SK-N-SH (cell line): ENCODE measurements at regions of chr1 and their contacts with region 1.

Region 1: DNA sequence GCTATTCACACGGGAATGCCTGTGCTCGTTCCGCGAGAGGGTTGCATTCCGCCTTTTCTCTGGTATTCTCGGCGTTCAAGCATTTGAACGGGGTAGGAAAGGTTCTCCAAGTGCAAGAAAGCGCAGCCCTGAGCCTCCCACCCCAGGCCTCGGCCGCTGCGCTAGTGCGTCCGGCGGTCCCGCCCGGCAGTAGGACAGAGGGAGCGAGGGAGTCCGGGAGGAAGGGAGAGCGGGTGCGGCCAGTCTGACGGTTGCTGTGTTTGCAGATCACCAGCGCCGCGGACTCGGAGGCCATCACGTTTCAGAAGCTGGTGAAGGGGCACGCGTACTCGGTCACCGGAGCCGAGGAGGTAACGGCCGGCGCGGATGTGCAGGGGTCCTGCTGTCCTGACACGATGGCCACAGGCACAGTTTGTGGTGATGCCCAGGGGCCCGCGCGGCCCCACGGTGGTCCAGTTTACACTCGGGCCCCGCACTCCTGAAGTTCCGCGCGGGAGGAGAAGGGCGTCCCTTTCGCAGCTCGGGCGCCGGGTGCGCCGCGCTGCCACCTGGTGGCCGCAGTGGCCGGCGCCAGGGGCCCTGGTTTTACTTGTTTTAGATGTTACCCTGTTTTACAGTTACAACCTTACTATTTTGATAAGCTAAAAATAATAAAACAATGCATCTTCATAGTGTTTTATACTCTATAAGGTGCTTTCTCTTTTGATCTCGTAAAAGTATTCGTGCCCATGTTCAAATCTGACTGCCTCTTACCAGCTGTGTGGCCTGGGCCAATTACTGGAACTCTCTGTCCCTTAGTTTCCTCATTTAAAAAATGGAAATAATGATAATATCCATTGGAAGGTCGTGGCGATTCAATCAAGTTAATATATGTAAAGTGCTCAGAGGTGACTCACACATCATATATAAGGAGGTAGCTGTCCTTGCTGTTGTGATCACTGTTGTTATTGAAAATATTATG is 36.7 kb downstream of the CAPN2 start:
- DNase-seq: peak; percentile 88
- H3K4me3 ChIP-seq: no peak overlapping the region; a peak in 1 of 4 replicates
- H3K27ac ChIP-seq: peak overlapping the region in 1 of 2 experiments; percentile 55; a peak in 1 of 4 replicates
- H3K4me1 ChIP-seq: peaks cover 8 to 12% of the 10 kb centered on the region in 2 experiments; a peak in 2 of 4 replicates
- H3K27me3 ChIP-seq: no peaks in the 10 kb centered on the region
- CTCF ChIP-seq: peak; percentile 97
- EP300 ChIP-seq: no peak
- RAD21 ChIP-seq: peak; percentile 74

Region 2: GRCh38 chr1:223549740-223550139 is 199.3 kb before region 1 on chr1:
- CTCF ChIA-PET with region 1: no interaction called
- POLR2A ChIA-PET with region 1: no interaction called
- DNase-seq: no peak
- H3K4me3 ChIP-seq: no peak overlapping the region
- H3K27ac ChIP-seq: no peak overlapping the region
- H3K4me1 ChIP-seq: no peaks in the 10 kb centered on the region
- H3K27me3 ChIP-seq: no peaks in the 10 kb centered on the region; the same call in 1 of the 2 replicates
- CTCF ChIP-seq: no peak; the same call in 1 of the 2 replicates
- EP300 ChIP-seq: no peak
- RAD21 ChIP-seq: no peak

Region 3: GRCh38 chr1:223695941-223696340 is 53.1 kb before region 1 on chr1:
- CTCF ChIA-PET with region 1: interaction called, 44 read pairs
- POLR2A ChIA-PET with region 1: no interaction called
- DNase-seq: no peak
- H3K4me3 ChIP-seq: no peak overlapping the region
- H3K27ac ChIP-seq: no peak overlapping the region
- H3K4me1 ChIP-seq: peaks cover under 1 to 11% of the 10 kb centered on the region in 2 experiments; a peak in 3 of 4 replicates
- H3K27me3 ChIP-seq: no peaks in the 10 kb centered on the region
- CTCF ChIP-seq: no peak
- EP300 ChIP-seq: no peak
- RAD21 ChIP-seq: no peak

Region 4: GRCh38 chr1:223712194-223712849 is 36.7 kb before region 1 on chr1 and contains the start of gene CAPN2:
- CTCF ChIA-PET with region 1: interaction called, 110 read pairs
- POLR2A ChIA-PET with region 1: interaction called, 3 read pairs
- DNase-seq: peak; percentile 96
- H3K4me3 ChIP-seq: peak within 1 kb of the TSS; percentile 72 to 83
- H3K27ac ChIP-seq: peak within 1 kb of the TSS; percentile 85 to 88
- H3K4me1 ChIP-seq: peaks cover 42 to 58% of the 10 kb centered on the region in 2 experiments
- H3K27me3 ChIP-seq: no peaks in the 10 kb centered on the region
- CTCF ChIP-seq: peak; percentile 63
- EP300 ChIP-seq: no peak
- RAD21 ChIP-seq: peak; percentile 64
- polyA plus RNA-seq, gene CAPN2: 208 and 209 TPM in 2 replicates

Region 5: GRCh38 chr1:223732992-223733798 is 15.9 kb before region 1 on chr1:
- CTCF ChIA-PET with region 1: interaction called, 45 read pairs
- POLR2A ChIA-PET with region 1: no interaction called
- DNase-seq: no peak
- H3K4me3 ChIP-seq: no peak overlapping the region
- H3K27ac ChIP-seq: peak overlapping the region; percentile 66 to 91
- H3K4me1 ChIP-seq: peaks cover 29 to 40% of the 10 kb centered on the region in 2 experiments
- H3K27me3 ChIP-seq: no peaks in the 10 kb centered on the region
- CTCF ChIP-seq: no peak
- EP300 ChIP-seq: no peak; a peak in 1 of 4 replicates
- RAD21 ChIP-seq: no peak

Region 6: DNA sequence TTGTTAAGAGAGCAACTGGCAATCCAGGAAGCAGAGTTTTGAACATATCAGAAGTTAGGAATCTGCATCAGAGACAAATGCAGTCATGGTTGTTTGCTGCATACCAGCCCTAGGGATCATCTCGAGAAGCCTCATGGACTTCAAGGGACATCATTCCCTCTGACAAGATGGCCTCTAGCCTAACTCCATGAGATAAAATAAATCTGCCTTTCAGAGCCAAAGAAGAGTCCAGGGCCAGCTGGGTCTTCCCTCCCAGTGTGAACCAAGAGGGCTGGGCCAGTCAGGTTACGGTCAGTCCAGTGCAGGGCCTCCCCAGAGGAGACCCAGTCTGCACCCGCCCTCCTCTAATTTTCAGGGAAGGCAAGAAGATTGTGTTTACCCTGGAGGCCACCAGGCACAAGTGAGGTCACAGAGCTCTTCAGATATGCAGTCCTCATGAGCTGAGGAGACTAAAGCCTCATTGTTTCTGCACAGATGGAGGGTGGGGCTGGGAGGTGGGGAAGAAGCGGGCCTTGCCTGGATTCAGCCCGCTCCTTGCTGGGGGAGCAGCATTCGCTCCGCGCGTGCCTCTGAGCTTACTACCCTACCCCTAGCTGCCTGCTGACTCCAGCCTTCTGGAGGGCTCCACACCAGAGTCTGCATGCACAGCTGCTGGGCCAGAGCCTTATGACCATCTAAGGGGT is 16.1 kb after region 1 on chr1:
- CTCF ChIA-PET with region 1: interaction called, 46 read pairs
- POLR2A ChIA-PET with region 1: interaction called, 5 read pairs
- DNase-seq: no peak
- H3K4me3 ChIP-seq: no peak overlapping the region
- H3K27ac ChIP-seq: no peak overlapping the region
- H3K4me1 ChIP-seq: no peaks in the 10 kb centered on the region
- H3K27me3 ChIP-seq: no peaks in the 10 kb centered on the region
- CTCF ChIP-seq: no peak
- EP300 ChIP-seq: no peak
- RAD21 ChIP-seq: no peak

Region 7: GRCh38 chr1:223780949-223781348 is 31.9 kb after region 1 on chr1:
- CTCF ChIA-PET with region 1: interaction called, 13 read pairs
- POLR2A ChIA-PET with region 1: no interaction called
- DNase-seq: no peak
- H3K4me3 ChIP-seq: no peak overlapping the region
- H3K27ac ChIP-seq: no peak overlapping the region
- H3K4me1 ChIP-seq: peaks cover 4 to 8% of the 10 kb centered on the region in 2 experiments; a peak in 2 of 4 replicates
- H3K27me3 ChIP-seq: no peaks in the 10 kb centered on the region
- CTCF ChIP-seq: no peak
- EP300 ChIP-seq: no peak
- RAD21 ChIP-seq: no peak